HCT116 (cell line): ENCODE measurements at regions of chr7 and their contacts with region 1.

Region 1: GRCh38 chr7:135672560-135673359 is 10.4 kb downstream of the STMP1 start:
- DNase-seq: peak; percentile 37
- ATAC-seq: peak; percentile 88
- H3K4me3 ChIP-seq: no peak overlapping the region
- H3K27ac ChIP-seq: no peak overlapping the region
- H3K4me1 ChIP-seq: no peaks in the 10 kb centered on the region
- H3K27me3 ChIP-seq: no peaks in the 10 kb centered on the region
- CTCF ChIP-seq: peak; percentile 66 to 85 (median 78); a peak in 5 of 6 replicates
- POLR2A ChIP-seq: no peak
- RAD21 ChIP-seq: peak; percentile 83

Region 2: GRCh38 chr7:135662373-135663114 is 10.2 kb before region 1 on chr7 and contains the start of gene STMP1:
- CTCF ChIA-PET with region 1: interaction called, 12 read pairs
- POLR2A ChIA-PET with region 1: interaction called, 9 read pairs
- RAD21 ChIA-PET with region 1: no interaction called
- intact Hi-C with region 1: no loop called
- DNase-seq: peak; percentile 85
- ATAC-seq: peak; percentile 87
- H3K4me3 ChIP-seq: peak within 1 kb of the TSS; percentile 90 to 95
- H3K27ac ChIP-seq: peak within 1 kb of the TSS; percentile 71
- H3K4me1 ChIP-seq: peaks cover 3 to 22% of the 10 kb centered on the region in 2 experiments; a peak in 1 of 4 replicates
- H3K27me3 ChIP-seq: no peaks in the 10 kb centered on the region
- CTCF ChIP-seq: peak in 2 of 3 experiments; percentile 49 to 52; a peak in 4 of 6 replicates
- POLR2A ChIP-seq: peak; percentile 89
- RAD21 ChIP-seq: peak; percentile 69
- total RNA-seq, gene STMP1: 32.8 TPM

Region 3: DNA sequence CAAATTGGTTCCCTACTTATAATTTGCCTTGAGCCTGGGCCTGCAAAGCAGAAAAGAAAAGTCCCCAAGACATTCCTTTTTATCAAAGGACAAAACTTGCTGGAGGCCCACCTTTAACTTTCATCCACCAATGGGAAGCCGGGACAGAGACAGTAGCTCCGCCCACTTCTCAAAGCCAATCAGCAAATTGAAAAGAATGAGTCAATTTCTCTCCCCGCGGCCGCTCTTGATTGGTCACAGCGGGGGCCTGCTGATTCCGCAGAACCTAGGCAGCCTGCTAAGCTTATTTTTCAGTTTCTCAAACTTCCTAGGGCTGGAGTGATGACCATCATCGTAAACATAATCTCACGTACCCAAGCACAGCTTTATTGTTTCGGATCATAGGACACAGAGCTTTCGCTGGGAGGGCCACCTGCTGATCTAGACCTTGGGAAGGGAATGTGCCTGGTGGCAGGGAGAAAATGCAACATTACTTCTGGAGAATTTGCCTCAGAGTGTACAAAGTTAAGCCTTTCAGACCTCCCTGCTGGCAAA is 55.4 kb after region 1 on chr7 and contains the start of gene SLC13A4:
- CTCF ChIA-PET with region 1: no interaction called
- POLR2A ChIA-PET with region 1: no interaction called
- RAD21 ChIA-PET with region 1: no interaction called
- intact Hi-C with region 1: no loop called
- DNase-seq: no peak
- ATAC-seq: peak; percentile 82
- H3K4me3 ChIP-seq: no peak within 1 kb of the TSS
- H3K27ac ChIP-seq: no peak within 1 kb of the TSS
- H3K4me1 ChIP-seq: peaks cover 0 to 8% of the 10 kb centered on the region in 2 experiments; a peak in 1 of 4 replicates
- H3K27me3 ChIP-seq: no peaks in the 10 kb centered on the region
- CTCF ChIP-seq: no peak
- POLR2A ChIP-seq: no peak
- RAD21 ChIP-seq: no peak
- total RNA-seq, gene SLC13A4: 0.30 TPM

Region 4: GRCh38 chr7:135911099-135911498 is 238.3 kb after region 1 on chr7:
- CTCF ChIA-PET with region 1: no interaction called
- POLR2A ChIA-PET with region 1: no interaction called
- RAD21 ChIA-PET with region 1: no interaction called
- intact Hi-C with region 1: no loop called
- DNase-seq: no peak
- ATAC-seq: no peak
- H3K4me3 ChIP-seq: no peak overlapping the region
- H3K27ac ChIP-seq: no peak overlapping the region
- H3K4me1 ChIP-seq: no peaks in the 10 kb centered on the region
- H3K27me3 ChIP-seq: no peaks in the 10 kb centered on the region
- CTCF ChIP-seq: no peak
- POLR2A ChIP-seq: no peak
- RAD21 ChIP-seq: no peak

Region 5: GRCh38 chr7:136009488-136010079 is 336.8 kb after region 1 on chr7:
- CTCF ChIA-PET with region 1: interaction called, 6 read pairs
- POLR2A ChIA-PET with region 1: no interaction called
- RAD21 ChIA-PET with region 1: no interaction called
- intact Hi-C with region 1: loop called (anchors 1 kb)
- DNase-seq: peak; percentile 22
- ATAC-seq: 0 out of 2 replicates have a peak, but pooled peaks have one; percentile 55
- H3K4me3 ChIP-seq: no peak overlapping the region
- H3K27ac ChIP-seq: no peak overlapping the region
- H3K4me1 ChIP-seq: no peaks in the 10 kb centered on the region
- H3K27me3 ChIP-seq: peaks cover 16% of the 10 kb centered on the region
- CTCF ChIP-seq: peak; percentile 56 to 83 (median 75)
- POLR2A ChIP-seq: no peak
- RAD21 ChIP-seq: peak; percentile 88

Region 6: GRCh38 chr7:137454246-137454724 is 1781.5 kb after region 1 on chr7:
- CTCF ChIA-PET with region 1: no interaction called
- POLR2A ChIA-PET with region 1: no interaction called
- RAD21 ChIA-PET with region 1: no interaction called
- intact Hi-C with region 1: loop called (anchors 5 kb)
- DNase-seq: no peak
- ATAC-seq: 0 out of 2 replicates have a peak, but pooled peaks have one; percentile 46
- H3K4me3 ChIP-seq: no peak overlapping the region
- H3K27ac ChIP-seq: no peak overlapping the region
- H3K4me1 ChIP-seq: no peaks in the 10 kb centered on the region
- H3K27me3 ChIP-seq: no peaks in the 10 kb centered on the region
- CTCF ChIP-seq: peak; percentile 23 to 70 (median 53); a peak in 5 of 6 replicates
- POLR2A ChIP-seq: no peak
- RAD21 ChIP-seq: peak; percentile 58

Region 7: DNA sequence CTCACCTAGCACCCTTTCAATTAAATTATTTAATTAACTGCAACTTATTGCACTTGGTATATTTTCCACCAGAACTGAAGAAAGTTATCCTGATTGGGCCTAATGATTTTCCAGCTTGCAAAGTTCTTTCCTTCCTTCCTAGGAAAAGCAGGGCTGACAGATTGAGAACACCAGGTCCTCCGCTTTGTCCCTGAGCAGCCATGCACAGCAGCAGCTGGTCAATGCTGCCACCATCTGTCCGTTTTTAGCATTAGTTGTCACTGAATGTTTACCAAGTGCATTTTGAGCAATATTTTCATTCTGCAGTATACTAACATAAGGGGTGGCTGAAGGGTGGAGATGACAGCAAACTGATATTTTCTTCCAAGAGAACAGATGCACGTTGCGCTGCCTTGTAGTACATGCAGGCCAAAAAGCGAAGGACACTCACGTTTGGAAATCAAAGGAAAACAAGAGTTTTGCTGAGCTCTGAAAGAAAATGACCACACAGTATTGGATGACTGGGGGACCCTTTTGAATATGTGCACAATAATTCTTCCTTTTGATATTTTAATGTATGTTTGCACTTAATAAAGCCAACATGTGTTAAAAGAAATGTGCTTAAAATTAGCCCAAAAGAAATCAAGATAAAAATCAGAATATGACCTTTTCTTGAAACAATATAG is 1919.6 kb after region 1 on chr7:
- CTCF ChIA-PET with region 1: no interaction called
- POLR2A ChIA-PET with region 1: no interaction called
- RAD21 ChIA-PET with region 1: no interaction called
- intact Hi-C with region 1: loop called (anchors 5 kb)
- DNase-seq: peak; percentile 22
- ATAC-seq: peak; percentile 92
- H3K4me3 ChIP-seq: no peak overlapping the region
- H3K27ac ChIP-seq: no peak overlapping the region
- H3K4me1 ChIP-seq: peaks cover 0 to 6% of the 10 kb centered on the region in 2 experiments; a peak in 1 of 4 replicates
- H3K27me3 ChIP-seq: 0 out of 2 replicates have a peak, but pooled peaks cover 6% of the 10 kb centered on the region
- CTCF ChIP-seq: peak; percentile 62 to 80 (median 65); a peak in 5 of 6 replicates
- POLR2A ChIP-seq: no peak
- RAD21 ChIP-seq: peak; percentile 86